Activated CD8-positive, alpha-beta T cell treated with anti-CD3 and anti-CD28 coated beads for 36 hours (primary cell): ENCODE measurements at regions of chr10 and their contacts with region 1.

Region 1: GRCh38 chr10:110512461-110513187 is 14.9 kb downstream of the DUSP5 start:
- DNase-seq: peak; percentile 89
- ATAC-seq: peak; percentile 98
- H3K4me3 Mint-ChIP-seq: no peak overlapping the region
- H3K27ac Mint-ChIP-seq: peak overlapping the region; percentile 88
- H3K4me1 Mint-ChIP-seq: peaks cover 57% of the 10 kb centered on the region
- H3K27me3 Mint-ChIP-seq: no peaks in the 10 kb centered on the region
- CTCF ChIP-seq: no peak

Region 2: GRCh38 chr10:110487411-110488123 is 25.1 kb before region 1 on chr10:
- CTCF ChIA-PET with region 1: no interaction called
- POLR2A ChIA-PET with region 1: no interaction called
- intact Hi-C with region 1: no loop called
- DNase-seq: no peak
- ATAC-seq: peak; percentile 45
- H3K4me3 Mint-ChIP-seq: no peak overlapping the region
- H3K27ac Mint-ChIP-seq: no peak overlapping the region
- H3K4me1 Mint-ChIP-seq: peaks cover 19% of the 10 kb centered on the region
- H3K27me3 Mint-ChIP-seq: peaks cover 16% of the 10 kb centered on the region
- CTCF ChIP-seq: no peak

Region 3: DNA sequence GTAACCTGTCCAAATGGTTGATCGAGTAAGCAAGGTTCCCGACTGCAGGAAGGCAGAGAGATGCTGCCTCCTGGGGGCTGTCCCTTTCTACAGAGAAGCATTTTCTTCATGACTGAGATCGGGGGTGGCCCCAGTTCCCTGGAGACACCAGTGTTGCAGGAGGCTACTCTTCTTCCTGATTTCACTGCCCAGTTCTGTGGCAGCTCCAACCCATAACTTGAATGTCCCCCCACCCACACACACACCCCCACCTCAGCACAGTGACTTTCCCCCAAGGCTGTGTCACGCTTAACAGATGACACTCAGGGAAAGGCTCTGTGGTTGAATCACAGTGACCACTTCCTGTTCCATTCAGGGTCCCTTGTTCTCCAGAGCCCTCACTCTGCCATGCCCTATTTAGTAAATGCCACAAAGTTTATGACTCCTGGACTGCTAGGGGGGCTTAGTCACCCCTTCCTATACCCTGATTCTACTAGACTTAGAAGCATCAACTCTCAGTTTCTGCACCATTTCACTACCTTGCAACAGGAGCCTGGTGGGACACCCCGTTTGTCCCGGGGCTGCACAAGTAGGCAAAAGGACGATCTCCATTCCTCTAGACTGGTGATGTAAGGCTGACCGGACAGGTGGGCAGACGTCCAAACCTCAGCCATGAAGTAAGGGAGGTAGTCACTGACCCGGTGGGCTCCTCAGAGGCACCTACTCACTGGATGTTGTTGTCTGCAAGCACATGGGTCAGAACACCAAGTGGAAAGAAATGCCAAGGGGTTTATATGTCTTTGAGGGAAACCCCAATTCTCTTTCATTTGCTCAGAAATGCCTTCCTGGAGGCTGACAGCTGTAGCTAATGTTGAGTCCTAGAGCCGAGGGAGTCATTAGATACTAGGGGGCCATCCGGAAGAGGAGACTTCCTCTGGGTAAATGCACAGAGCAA is 23.6 kb after region 1 on chr10:
- CTCF ChIA-PET with region 1: interaction called, 5 read pairs
- POLR2A ChIA-PET with region 1: interaction called, 13 read pairs
- intact Hi-C with region 1: no loop called
- DNase-seq: peak; percentile 95
- ATAC-seq: peak; percentile 92
- H3K4me3 Mint-ChIP-seq: peak overlapping the region; percentile 24
- H3K27ac Mint-ChIP-seq: peak overlapping the region; percentile 90
- H3K4me1 Mint-ChIP-seq: peaks cover 46% of the 10 kb centered on the region
- H3K27me3 Mint-ChIP-seq: no peaks in the 10 kb centered on the region
- CTCF ChIP-seq: no peak